Posterior vena cava (tissue), 2 donors: ENCODE measurements at regions of chr1 and their contacts with region 1.

Region 1: GRCh38 chr1:60132985-60133675 is 59.6 kb upstream of the C1orf87 start:
- DNase-seq: no peak

Region 2: DNA sequence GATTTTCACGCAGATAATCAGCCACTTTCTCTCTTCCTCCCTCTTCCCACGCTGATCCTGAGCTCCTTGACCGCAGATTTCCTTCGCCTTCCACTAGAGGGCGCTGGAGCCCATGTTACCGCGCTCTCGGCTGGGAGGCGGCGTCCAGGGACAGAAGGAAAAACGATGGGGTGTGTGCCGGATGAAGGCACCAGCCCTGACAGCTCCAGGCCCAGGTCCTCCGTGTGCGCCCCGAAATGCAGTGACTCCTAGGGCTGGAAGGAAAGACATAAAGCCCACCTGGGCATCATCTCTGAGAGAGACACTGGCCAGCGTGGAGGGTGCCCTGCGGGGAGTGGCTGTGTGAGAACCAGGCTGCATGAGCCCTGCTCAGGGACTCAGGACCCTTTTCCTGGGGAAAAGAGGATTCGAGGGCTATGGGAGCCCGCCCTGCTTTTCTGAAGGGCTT is 161.6 kb before region 1 on chr1:
- intact Hi-C with region 1: loop called in 1 of 2 experiments (anchors 10 kb)
- DNase-seq: peak; percentile 90